ENCODE measurements at regions of chr1 and their contacts with region 1.

Region 1: GRCh38 chr1:55284852-55285251 is 69.7 kb upstream of the USP24 start:
- DNase-seq: no peak
- ATAC-seq: no peak
- H3K4me3 Mint-ChIP-seq: no peak overlapping the region
- H3K27ac Mint-ChIP-seq: no peak overlapping the region
- H3K4me1 Mint-ChIP-seq: peaks cover 47% of the 10 kb centered on the region
- H3K27me3 Mint-ChIP-seq: peaks cover 3% of the 10 kb centered on the region
- CTCF ChIP-seq: no peak

Region 2: DNA sequence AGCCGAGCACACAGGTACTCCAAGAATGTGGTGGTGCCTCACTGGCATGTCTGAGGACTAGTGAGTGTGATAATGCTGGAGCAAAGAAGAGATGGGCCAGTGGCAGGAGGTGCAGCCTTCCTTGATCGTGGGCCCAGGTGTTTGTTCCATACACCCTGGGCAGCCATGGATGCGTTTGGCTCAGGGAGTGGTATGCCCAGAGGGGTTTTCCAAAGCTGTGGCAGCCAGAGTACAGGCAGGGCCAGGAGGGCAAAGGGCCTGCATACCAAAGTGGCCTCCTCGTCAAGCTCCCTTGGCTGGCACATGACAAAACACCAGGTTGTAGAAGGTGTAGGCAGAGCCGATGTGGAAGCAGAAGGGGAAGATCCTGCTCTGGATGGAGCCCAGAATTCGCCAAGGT is 539.6 kb before region 1 on chr1:
- CTCF ChIA-PET with region 1: no interaction called
- POLR2A ChIA-PET with region 1: no interaction called
- intact Hi-C with region 1: no loop called
- DNase-seq: no peak
- ATAC-seq: no peak
- H3K4me3 Mint-ChIP-seq: no peak overlapping the region
- H3K27ac Mint-ChIP-seq: no peak overlapping the region
- H3K4me1 Mint-ChIP-seq: no peaks in the 10 kb centered on the region
- H3K27me3 Mint-ChIP-seq: no peaks in the 10 kb centered on the region
- CTCF ChIP-seq: no peak

Region 3: DNA sequence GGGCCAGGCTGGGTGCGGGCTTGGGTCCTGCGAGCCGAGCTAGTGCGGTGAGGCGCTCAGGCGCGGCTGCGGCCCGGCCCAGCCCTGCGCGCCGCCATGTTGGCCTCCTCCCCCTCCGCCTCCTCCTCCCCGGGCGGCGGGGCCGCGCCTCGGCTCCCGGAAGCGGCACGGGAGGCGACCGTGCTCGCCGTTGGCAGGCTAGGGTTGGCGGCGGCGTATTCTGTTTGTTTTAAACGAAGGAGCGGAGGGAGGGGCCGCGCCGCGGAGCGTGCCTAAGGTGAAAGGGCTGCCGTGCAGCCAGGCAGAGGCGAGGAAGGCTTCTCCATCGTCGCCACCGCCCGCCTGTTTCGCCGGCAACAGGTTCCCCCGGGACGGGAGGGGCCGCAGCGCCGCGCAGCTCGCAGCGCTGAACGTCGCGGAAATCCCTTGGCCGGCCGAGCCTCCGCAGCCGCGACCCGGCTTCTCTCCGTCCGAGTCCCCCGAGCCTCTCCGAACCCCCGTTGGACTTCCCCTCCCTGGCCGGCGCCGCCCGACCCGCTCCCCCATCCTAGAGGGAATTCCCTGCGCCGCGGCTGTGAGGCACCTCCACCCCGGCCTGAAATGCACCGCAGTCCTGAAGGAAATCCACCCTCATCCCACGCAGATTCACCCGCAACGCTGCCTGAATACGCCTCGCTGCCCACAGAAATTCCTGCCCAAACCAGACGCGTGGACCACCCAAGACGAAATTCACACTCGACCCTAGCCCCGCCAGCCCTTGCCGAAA is 69.4 kb before region 1 on chr1 and contains the start of gene USP24:
- CTCF ChIA-PET with region 1: no interaction called
- POLR2A ChIA-PET with region 1: interaction called, 27 read pairs
- intact Hi-C with region 1: loop called (anchors 1 kb)
- DNase-seq: peak; percentile 79
- ATAC-seq: peak; percentile 76
- H3K4me3 Mint-ChIP-seq: peak within 1 kb of the TSS; percentile 92
- H3K27ac Mint-ChIP-seq: peak within 1 kb of the TSS; percentile 97
- H3K4me1 Mint-ChIP-seq: peaks cover 65% of the 10 kb centered on the region
- H3K27me3 Mint-ChIP-seq: no peaks in the 10 kb centered on the region
- CTCF ChIP-seq: no peak
- total RNA-seq, gene USP24: 91.4 and 93.2 TPM in 2 replicates

Region 4: DNA sequence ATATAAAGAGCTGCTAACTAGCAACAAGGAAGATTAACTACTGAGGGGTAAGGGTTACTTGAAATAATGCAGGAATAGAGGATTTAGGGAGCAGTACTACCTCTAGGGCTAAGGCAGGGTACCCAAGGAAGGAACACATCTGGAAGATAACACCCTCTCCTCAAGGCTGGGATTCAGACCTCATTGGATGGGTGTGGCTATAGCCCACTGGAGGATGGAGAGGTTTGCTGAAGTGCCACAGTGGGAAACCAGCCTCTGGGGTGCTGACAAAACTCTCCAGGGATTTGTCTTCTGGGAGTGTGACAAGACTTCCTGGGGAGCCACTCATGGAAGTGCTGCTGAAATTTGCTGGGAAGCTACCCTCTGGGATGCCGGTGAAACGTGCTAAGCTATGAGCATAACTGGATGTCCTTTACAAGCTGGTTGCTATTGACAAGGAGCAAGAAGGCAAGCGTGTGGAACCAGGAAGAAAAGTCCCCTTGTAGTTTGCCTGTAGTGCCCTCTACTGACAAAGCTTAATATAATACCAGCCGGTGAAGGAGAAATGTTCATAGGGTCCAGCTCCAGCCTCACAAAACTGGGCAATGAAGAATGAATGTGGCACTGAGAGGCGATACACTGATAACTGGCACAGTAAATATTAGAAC is 53.1 kb after region 1 on chr1:
- CTCF ChIA-PET with region 1: interaction called, 26 read pairs
- POLR2A ChIA-PET with region 1: interaction called, 15 read pairs
- intact Hi-C with region 1: loop called (anchors 1 kb)
- DNase-seq: no peak
- ATAC-seq: peak; percentile 66
- H3K4me3 Mint-ChIP-seq: no peak overlapping the region
- H3K27ac Mint-ChIP-seq: peak overlapping the region; percentile 12
- H3K4me1 Mint-ChIP-seq: peaks cover 9% of the 10 kb centered on the region
- H3K27me3 Mint-ChIP-seq: peaks cover 6% of the 10 kb centered on the region
- CTCF ChIP-seq: no peak

Region 5: GRCh38 chr1:55860798-55861519 is 576.1 kb after region 1 on chr1:
- CTCF ChIA-PET with region 1: no interaction called
- POLR2A ChIA-PET with region 1: no interaction called
- intact Hi-C with region 1: no loop called
- DNase-seq: no peak
- ATAC-seq: no peak
- H3K4me3 Mint-ChIP-seq: no peak overlapping the region
- H3K27ac Mint-ChIP-seq: no peak overlapping the region
- H3K4me1 Mint-ChIP-seq: no peaks in the 10 kb centered on the region
- H3K27me3 Mint-ChIP-seq: peaks cover 4% of the 10 kb centered on the region
- CTCF ChIP-seq: no peak

Region 6: GRCh38 chr1:56135069-56135863 is 850.4 kb after region 1 on chr1:
- CTCF ChIA-PET with region 1: no interaction called
- POLR2A ChIA-PET with region 1: interaction called, 4 read pairs
- intact Hi-C with region 1: loop called (anchors 5 kb)
- DNase-seq: no peak
- ATAC-seq: peak; percentile 31
- H3K4me3 Mint-ChIP-seq: peak overlapping the region; percentile 30
- H3K27ac Mint-ChIP-seq: peak overlapping the region; percentile 13
- H3K4me1 Mint-ChIP-seq: peaks cover 42% of the 10 kb centered on the region
- H3K27me3 Mint-ChIP-seq: peaks cover 8% of the 10 kb centered on the region
- CTCF ChIP-seq: no peak

Region 7: DNA sequence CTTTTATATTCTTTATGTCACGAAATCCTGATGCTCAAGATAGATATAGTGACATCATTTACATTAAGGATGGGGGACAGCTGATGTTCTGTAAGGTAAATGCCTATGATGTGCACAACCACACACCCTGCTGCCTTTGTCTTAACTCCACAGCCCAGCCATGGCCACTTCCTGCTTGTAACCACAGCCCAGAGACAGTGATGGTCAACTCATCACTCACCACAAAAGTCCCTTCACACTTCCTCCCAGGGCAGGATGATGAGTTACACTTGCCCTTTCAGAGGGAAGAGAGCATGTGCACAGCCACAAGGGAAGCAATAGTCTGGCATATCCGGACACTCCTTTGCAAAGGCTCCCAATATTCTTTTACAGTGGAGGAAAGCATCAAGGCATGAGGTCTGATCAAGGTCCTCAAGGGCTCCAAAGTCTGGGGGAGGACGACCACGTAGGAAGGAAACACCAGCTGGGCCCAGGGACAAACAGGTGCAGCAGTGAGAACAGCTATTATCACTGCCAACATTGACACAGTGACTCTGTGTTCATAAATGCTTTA is 1240.7 kb after region 1 on chr1:
- CTCF ChIA-PET with region 1: no interaction called
- POLR2A ChIA-PET with region 1: interaction called, 4 read pairs
- intact Hi-C with region 1: loop called (anchors 1 kb)
- DNase-seq: peak; percentile 27
- ATAC-seq: peak; percentile 31
- H3K4me3 Mint-ChIP-seq: peak overlapping the region; percentile 48
- H3K27ac Mint-ChIP-seq: peak overlapping the region; percentile 82
- H3K4me1 Mint-ChIP-seq: peaks cover 59% of the 10 kb centered on the region
- H3K27me3 Mint-ChIP-seq: no peaks in the 10 kb centered on the region
- CTCF ChIP-seq: no peak

Region 8: GRCh38 chr1:56709269-56709880 is 1424.5 kb after region 1 on chr1:
- CTCF ChIA-PET with region 1: interaction called, 17 read pairs
- POLR2A ChIA-PET with region 1: no interaction called
- intact Hi-C with region 1: loop called (anchors 1 kb)
- DNase-seq: no peak
- ATAC-seq: no peak
- H3K4me3 Mint-ChIP-seq: no peak overlapping the region
- H3K27ac Mint-ChIP-seq: no peak overlapping the region
- H3K4me1 Mint-ChIP-seq: no peaks in the 10 kb centered on the region
- H3K27me3 Mint-ChIP-seq: peaks cover 25% of the 10 kb centered on the region
- CTCF ChIP-seq: no peak